ENCODE measurements at regions of chr1 and their contacts with region 1.

Region 1: DNA sequence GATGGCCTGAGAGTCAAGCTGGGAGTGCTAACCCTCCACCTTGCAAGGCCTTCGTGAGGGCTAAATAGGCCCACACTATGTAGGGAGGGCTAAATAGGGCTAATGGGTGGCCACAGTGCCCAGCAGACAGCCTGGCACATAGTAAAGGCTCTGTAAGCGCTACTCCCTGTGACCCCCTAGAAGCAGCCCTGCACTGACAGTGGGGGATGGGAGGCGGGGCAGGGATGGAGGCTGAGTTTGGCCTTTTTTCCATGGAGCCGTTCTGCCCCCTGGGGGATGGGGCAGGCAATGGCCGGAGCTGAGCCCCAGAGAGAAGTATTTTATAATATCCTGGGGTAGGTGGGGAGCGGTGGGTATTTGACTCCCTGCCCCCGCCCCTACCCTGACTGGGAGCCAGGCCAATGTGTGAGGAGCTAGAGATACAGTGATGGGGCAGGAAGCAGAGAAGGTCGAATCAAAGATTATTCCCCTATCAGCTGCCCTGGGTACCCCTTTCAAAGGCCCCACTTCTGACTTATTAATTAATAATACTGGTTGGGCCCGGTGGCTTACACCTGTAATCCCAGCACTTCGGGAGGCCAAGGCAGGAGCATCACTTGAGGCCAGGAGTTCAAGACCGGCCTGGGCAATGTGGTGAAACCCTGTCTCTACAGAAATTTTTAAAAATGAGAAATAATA is 42.3 kb downstream of the LACTBL1 start:
- DNase-seq: peak; percentile 50
- ATAC-seq: peak; percentile 81 to 83

Region 2: DNA sequence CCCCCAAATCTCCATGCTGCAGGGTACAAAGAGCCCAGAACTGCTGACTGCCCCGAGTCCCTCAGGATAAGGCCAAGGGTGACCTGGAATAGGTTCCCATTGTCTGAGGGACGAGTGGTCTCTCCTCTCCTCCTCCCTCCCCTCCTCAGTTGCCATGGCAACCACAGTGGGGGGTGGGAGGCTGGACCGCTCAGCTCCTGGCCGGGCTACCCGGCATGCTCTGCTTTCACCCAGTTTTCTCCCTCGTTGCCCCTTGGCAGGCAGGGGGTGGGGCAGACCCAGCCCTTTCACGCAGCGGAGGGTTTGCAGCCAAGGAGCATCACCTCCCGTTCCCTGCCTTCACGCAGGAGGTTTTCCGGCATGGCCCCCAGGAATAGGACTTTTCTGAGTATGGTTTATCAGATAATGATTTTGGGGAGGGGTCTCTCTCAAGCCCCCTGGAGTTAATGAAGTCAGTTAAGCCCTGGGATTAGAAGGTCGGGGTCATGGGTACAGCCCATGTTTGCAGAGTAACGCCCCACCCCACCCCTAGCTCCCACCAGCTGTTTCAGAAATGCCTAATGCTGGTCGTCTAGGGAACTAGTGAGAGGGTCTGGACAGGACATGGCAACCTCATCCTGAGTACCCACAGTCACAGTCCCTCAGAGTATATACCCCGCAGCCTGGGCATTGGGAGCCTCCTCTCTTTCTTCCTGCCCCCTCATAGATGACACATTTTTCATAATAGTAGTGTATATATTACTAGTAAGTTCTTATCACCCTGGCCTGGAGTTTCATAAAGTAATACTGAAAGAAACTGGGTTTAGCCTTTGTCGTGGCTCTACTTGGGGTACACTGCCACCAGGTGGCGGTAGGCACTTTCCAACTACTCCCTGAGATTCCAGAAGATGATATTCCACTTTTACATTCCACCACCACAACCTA is 256.6 kb before region 1 on chr1:
- intact Hi-C with region 1: loop called (anchors 5 to 10 kb)
- DNase-seq: peak; percentile 55
- ATAC-seq: peak in 1 of 2 donors; percentile 32

Region 3: GRCh38 chr1:23140940-23141596 is 210.7 kb after region 1 on chr1:
- intact Hi-C with region 1: no loop called
- DNase-seq: no peak
- ATAC-seq: peak in 1 of 2 donors; percentile 12

Region 4: GRCh38 chr1:23273450-23274133 is 343.2 kb after region 1 on chr1:
- intact Hi-C with region 1: no loop called
- DNase-seq: no peak
- ATAC-seq: no peak

Region 5: DNA sequence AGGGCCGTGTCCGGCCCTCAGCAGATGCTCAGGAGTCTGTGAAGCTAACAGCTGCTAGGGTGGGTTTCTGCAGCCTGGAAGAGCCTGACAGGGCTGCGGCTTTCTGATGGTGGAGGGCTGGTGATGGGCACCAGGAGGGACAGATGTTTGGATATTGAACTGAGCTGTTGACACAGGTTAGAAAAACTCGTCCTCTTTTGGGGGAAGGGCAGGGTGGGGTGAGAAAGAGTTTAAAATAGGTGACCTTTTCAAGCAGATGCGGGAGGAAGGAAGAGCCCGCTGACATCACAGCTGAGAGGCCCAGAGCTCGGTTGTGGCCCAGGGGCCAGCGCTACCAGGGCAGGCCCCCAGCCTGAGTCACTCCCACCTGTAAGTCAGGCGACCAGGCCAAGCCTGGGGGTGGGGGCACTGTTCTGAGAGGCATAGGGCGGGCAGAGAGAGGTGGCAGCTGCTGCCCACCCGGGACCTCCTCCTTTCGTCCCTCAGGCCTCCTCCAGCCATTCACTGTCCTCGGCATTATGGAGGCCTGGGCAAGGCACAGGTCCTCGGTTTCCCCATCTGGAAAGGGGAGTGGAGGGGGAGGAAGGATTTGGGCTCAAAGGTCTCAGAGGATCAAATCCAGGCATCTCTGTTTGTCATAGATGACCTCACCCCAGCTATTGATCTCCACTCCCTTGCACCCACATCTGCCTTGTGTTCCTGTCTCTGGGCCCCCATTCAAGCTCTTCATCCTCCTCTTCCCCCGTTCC is 661.3 kb after region 1 on chr1:
- intact Hi-C with region 1: no loop called
- DNase-seq: no peak
- ATAC-seq: no peak